ENCODE measurements at regions of chr10 and their contacts with region 1.

Region 1: GRCh38 chr10:51729822-51730555 is 30.6 kb upstream of the CSTF2T start:
- DNase-seq: no peak
- ATAC-seq: no peak
- H3K4me3 ChIP-seq: no peak overlapping the region
- H3K27ac ChIP-seq: no peak overlapping the region
- H3K4me1 ChIP-seq: no peaks in the 10 kb centered on the region
- H3K27me3 ChIP-seq: no peaks in the 10 kb centered on the region
- CTCF ChIP-seq: no peak

Region 2: DNA sequence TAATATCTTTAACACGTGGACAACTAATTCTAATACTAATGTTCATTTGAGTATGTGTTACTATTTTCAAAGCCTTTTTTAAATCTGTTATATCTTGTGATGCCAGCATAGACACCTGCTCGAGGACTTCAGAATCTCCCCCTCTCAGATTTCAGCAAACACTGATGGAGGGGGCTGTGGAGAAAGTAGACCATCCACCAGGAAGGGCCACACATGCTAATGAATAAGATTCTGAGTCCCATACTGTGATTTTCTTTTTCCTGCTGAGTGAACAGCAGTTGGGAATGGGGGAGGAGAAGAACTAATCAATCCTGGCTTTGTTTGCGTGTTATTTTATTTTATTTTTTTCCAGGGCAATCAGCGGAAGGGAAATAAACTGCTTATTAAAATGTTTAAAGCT is 127.3 kb after region 1 on chr10:
- intact Hi-C with region 1: loop called in 1 of 2 experiments (anchors 10 kb)
- DNase-seq: no peak
- ATAC-seq: no peak
- H3K4me3 ChIP-seq: no peak overlapping the region
- H3K27ac ChIP-seq: no peak overlapping the region
- H3K4me1 ChIP-seq: peaks cover 32% of the 10 kb centered on the region
- H3K27me3 ChIP-seq: no peaks in the 10 kb centered on the region
- CTCF ChIP-seq: no peak

Measured in psoas muscle (tissue), 8 donors.